Naive thymus-derived CD4-positive, alpha-beta T cell (primary cell): ENCODE measurements at regions of chr16 and their contacts with region 1.

Region 1: DNA sequence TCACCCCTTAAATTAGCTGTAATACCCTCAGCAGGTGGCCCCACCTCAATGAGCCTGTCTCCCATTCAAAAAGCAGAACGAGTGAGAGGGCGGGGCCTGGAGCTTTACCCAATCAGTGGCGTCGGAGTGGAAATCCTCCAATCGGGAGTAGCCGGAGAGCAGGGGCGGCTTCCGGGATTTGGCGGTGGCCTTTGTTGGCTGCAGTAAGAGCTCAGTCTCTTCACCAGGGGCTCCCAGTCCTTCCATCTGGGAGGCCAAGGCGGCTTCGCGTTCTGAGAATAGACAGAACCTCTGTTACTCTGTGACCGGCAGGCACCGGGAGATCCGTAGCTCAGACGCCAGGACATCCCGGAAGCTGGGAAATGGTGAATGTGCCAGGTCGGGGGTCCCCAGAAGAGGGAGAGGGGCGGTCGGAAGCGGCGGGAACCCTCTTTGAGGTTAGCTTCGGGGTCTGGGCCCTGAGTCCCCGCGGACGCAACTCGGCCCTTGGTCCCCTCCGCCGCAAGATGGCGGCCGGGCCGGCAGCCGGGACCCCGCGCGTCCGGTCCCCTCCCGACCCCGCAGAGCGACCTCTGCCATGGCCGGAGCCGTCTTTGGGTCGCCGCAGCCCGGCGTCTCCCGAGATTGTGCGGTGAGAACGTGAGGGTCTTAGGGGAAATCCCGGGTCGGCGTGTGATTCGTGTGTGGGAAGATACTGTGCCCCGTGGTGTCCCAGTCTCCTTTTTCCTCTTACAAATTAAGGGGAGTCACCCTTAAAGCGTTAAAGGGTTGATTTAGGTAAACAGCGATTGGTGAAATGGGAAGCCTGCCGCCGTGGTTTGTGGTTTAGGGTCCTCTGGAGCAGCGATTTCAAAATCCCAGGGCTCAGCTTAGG is 160.3 kb upstream of the ZNF267 start:
- DNase-seq: peak; percentile 74 to 91 (median 87)
- ATAC-seq: peak; percentile 88
- H3K4me3 ChIP-seq: peak overlapping the region; percentile 98
- H3K4me3 Mint-ChIP-seq: peak overlapping the region; percentile 78 to 100 (median 99)
- H3K27ac ChIP-seq: peak overlapping the region; percentile 88
- H3K27ac Mint-ChIP-seq: peak overlapping the region; percentile 97 to 100 (median 98)
- H3K4me1 ChIP-seq: peaks cover 15 to 34% of the 10 kb centered on the region in 2 donors
- H3K4me1 Mint-ChIP-seq: peaks cover 34 to 68% (median 62%) of the 10 kb centered on the region in 7 donors
- H3K27me3 ChIP-seq: no peaks in the 10 kb centered on the region
- H3K27me3 Mint-ChIP-seq: no peaks in the 10 kb centered on the region

Region 2: DNA sequence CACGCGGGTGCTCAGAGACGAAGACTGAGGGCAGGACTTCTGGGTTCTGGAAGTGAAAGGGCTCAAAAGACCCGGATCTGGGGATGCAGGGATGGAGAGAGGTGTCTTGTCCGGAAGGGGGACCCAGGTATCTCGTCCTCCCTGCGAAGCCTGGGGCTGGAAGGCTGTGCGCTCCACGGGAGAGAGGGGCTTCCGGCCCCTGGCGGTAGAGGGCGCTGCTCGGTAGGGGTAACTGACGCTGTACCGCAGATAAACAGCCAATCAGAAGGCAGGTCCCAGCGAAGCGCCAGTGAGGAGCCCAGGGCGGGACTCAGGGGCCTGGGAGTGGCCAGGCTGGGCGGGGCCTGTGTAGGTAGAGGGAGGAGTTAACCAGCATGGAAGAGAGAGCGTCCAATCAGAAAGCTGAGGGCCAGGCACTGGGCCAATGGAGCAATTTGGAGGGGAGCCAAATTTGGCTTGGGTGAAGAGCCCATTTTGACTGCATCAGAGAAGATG is 240.6 kb before region 1 on chr16:
- CTCF ChIA-PET with region 1: no interaction called
- POLR2A ChIA-PET with region 1: no interaction called
- intact Hi-C with region 1: loop called in 1 of 2 experiments (anchors 5 kb)
- DNase-seq: peak in 1 of 9 donors; percentile 36
- ATAC-seq: peak; percentile 33
- H3K4me3 ChIP-seq: no peak overlapping the region
- H3K4me3 Mint-ChIP-seq: peak overlapping the region; percentile 60 to 84 (median 79)
- H3K27ac ChIP-seq: no peak overlapping the region
- H3K27ac Mint-ChIP-seq: peak overlapping the region in 1 of 9 donors; percentile 64
- H3K4me1 ChIP-seq: peaks cover 4 to 6% of the 10 kb centered on the region in 2 donors
- H3K4me1 Mint-ChIP-seq: peaks cover 8 to 29% (median 21%) of the 10 kb centered on the region in 7 donors
- H3K27me3 ChIP-seq: no peaks in the 10 kb centered on the region
- H3K27me3 Mint-ChIP-seq: peaks cover 0 to 52% (median 14%) of the 10 kb centered on the region in 5 donors

Region 3: DNA sequence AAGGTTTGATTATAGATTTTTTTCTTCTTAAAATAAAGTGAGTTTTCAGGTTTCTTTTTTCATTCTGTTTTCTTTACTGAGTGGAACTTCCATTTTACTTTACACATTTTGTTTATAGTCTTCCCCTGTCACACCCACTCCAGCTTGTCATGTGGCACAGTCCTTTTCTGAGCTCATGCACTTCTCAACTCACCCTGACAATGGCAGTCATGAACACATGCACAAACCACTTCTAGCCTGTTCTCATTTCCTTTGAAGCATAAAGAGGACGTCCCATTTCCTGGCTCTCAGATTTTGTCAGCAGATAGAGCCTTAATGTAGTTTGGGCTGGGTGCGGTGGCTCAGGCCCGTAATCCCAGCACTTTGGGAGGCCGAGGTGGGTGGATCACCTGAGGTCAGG is 17.6 kb before region 1 on chr16:
- CTCF ChIA-PET with region 1: interaction called, 3 read pairs
- POLR2A ChIA-PET with region 1: interaction called, 74 read pairs
- intact Hi-C with region 1: loop called (anchors 1 kb)
- DNase-seq: peak in 7 of 9 donors; percentile 73 to 91 (median 84)
- ATAC-seq: peak; percentile 92
- H3K4me3 ChIP-seq: no peak overlapping the region
- H3K4me3 Mint-ChIP-seq: no peak overlapping the region
- H3K27ac ChIP-seq: no peak overlapping the region
- H3K27ac Mint-ChIP-seq: no peak overlapping the region
- H3K4me1 ChIP-seq: peaks cover 14 to 25% of the 10 kb centered on the region in 2 donors
- H3K4me1 Mint-ChIP-seq: peaks cover 0 to 18% (median 15%) of the 10 kb centered on the region in 7 donors
- H3K27me3 ChIP-seq: no peaks in the 10 kb centered on the region
- H3K27me3 Mint-ChIP-seq: peaks cover 0 to 26% (median 0%) of the 10 kb centered on the region in 5 donors

Region 4: DNA sequence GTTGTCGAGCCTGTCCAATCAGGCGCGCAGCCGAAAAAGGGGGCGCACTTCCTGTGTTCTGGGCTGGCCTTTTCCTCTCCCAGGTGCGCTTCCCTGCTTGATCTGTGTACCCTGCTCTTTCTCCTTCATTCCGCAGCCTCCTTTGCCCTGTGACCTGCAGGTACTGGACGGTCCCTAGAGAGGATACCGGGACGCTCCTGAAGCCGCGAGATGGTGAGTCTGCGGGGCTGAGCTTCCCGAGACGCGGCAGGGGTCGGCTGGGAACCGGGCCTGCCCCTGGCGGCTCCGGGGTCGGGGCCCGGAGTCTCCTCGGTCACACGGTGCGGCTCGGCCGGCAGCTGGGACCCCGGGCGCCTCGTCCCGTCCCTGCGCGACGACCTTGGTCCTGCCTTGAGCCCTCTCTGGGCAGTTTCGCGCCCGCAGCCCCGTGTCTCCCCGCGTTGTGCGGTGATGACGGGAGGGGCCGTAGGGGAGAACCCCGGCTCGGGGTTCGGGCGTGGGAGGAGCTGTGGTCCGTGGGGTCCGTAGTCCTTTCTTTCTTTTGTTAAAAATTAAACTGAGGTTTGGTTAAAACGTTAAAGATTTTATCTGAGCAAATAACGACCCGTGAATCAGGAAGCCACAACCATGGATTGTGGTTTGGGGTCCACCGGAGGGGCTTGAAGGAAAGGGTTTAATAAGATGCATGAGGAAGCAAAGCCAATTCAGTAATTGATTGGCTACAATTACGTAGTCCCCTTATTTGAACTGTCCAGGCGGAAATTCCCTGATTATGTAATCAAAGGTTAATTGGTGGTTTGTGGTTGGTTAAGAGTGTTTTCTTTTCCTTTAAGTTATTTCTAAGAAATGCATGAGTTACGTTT is 12.6 kb before region 1 on chr16:
- CTCF ChIA-PET with region 1: interaction called, 7 read pairs
- POLR2A ChIA-PET with region 1: interaction called, 74 read pairs
- intact Hi-C with region 1: loop called (anchors 1 kb)
- DNase-seq: peak; percentile 67 to 86 (median 81)
- ATAC-seq: peak; percentile 84
- H3K4me3 ChIP-seq: peak overlapping the region; percentile 95
- H3K4me3 Mint-ChIP-seq: peak overlapping the region; percentile 87 to 95 (median 91)
- H3K27ac ChIP-seq: peak overlapping the region; percentile 90
- H3K27ac Mint-ChIP-seq: peak overlapping the region; percentile 86 to 97 (median 93)
- H3K4me1 ChIP-seq: peaks cover 19 to 28% of the 10 kb centered on the region in 2 donors
- H3K4me1 Mint-ChIP-seq: peaks cover 20 to 39% (median 37%) of the 10 kb centered on the region in 7 donors
- H3K27me3 ChIP-seq: no peaks in the 10 kb centered on the region
- H3K27me3 Mint-ChIP-seq: peaks cover 0 to 24% (median 0%) of the 10 kb centered on the region in 5 donors

Region 5: GRCh38 chr16:31873556-31874365 is 160.5 kb after region 1 on chr16 and contains the start of gene ZNF267:
- CTCF ChIA-PET with region 1: no interaction called
- POLR2A ChIA-PET with region 1: interaction called, 11 read pairs
- intact Hi-C with region 1: loop called (anchors 1 to 2 kb)
- DNase-seq: peak; percentile 79 to 96 (median 93)
- ATAC-seq: peak; percentile 79
- H3K4me3 ChIP-seq: peak within 1 kb of the TSS; percentile 90
- H3K4me3 Mint-ChIP-seq: peak within 1 kb of the TSS; percentile 89 to 99 (median 94)
- H3K27ac ChIP-seq: peak within 1 kb of the TSS; percentile 94
- H3K27ac Mint-ChIP-seq: peak within 1 kb of the TSS; percentile 85 to 98 (median 96)
- H3K4me1 ChIP-seq: peaks cover 66 to 72% of the 10 kb centered on the region in 2 donors
- H3K4me1 Mint-ChIP-seq: peaks cover 54 to 95% (median 84%) of the 10 kb centered on the region in 7 donors
- H3K27me3 ChIP-seq: no peaks in the 10 kb centered on the region
- H3K27me3 Mint-ChIP-seq: no peaks in the 10 kb centered on the region
- total RNA-seq, gene ZNF267: 34.8 to 74.9 (median 48.8) TPM

Region 6: DNA sequence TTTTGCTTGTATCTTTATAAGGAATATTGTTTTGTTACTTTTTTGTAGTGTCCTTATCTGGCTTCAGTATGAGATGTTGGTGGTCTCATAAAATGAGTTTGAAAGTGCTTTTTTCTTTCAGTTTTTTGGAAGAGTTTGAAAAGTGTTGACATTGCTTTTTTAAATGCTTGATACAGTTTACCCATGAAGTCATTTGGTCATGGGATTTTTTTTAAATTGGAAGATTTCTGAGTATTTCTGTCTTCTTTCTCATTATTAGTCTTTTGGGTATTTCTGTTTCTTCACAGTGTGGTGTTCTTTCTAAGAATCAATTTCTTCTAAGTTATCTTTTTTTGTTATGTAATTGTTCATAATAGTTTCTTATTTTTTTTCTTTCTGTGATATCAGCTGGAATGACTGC is 175.4 kb after region 1 on chr16:
- CTCF ChIA-PET with region 1: no interaction called
- POLR2A ChIA-PET with region 1: no interaction called
- intact Hi-C with region 1: no loop called
- DNase-seq: no peak
- ATAC-seq: no peak
- H3K4me3 ChIP-seq: no peak overlapping the region
- H3K4me3 Mint-ChIP-seq: peak overlapping the region in 4 of 10 donors; percentile 2 to 55 (median 17)
- H3K27ac ChIP-seq: no peak overlapping the region
- H3K27ac Mint-ChIP-seq: peak overlapping the region in 6 of 9 donors; percentile 17 to 84 (median 38)
- H3K4me1 ChIP-seq: peaks cover 0 to 7% of the 10 kb centered on the region in 2 donors
- H3K4me1 Mint-ChIP-seq: peaks cover 20 to 76% (median 62%) of the 10 kb centered on the region in 7 donors
- H3K27me3 ChIP-seq: no peaks in the 10 kb centered on the region
- H3K27me3 Mint-ChIP-seq: no peaks in the 10 kb centered on the region